Naive thymus-derived CD4-positive, alpha-beta T cell (primary cell): ENCODE measurements at regions of chr6 and their contacts with region 1.

Region 1: GRCh38 chr6:24689964-24690363 is 23.1 kb downstream of the ACOT13 start:
- DNase-seq: no peak
- ATAC-seq: no peak
- H3K4me3 ChIP-seq: no peak overlapping the region
- H3K4me3 Mint-ChIP-seq: no peak overlapping the region
- H3K27ac ChIP-seq: no peak overlapping the region
- H3K27ac Mint-ChIP-seq: peak overlapping the region in 1 of 9 donors; percentile 18
- H3K4me1 ChIP-seq: peaks cover 0 to 6% of the 10 kb centered on the region in 2 donors
- H3K4me1 Mint-ChIP-seq: peaks cover 7 to 24% (median 11%) of the 10 kb centered on the region in 7 donors
- H3K27me3 ChIP-seq: no peaks in the 10 kb centered on the region
- H3K27me3 Mint-ChIP-seq: no peaks in the 10 kb centered on the region

Region 2: DNA sequence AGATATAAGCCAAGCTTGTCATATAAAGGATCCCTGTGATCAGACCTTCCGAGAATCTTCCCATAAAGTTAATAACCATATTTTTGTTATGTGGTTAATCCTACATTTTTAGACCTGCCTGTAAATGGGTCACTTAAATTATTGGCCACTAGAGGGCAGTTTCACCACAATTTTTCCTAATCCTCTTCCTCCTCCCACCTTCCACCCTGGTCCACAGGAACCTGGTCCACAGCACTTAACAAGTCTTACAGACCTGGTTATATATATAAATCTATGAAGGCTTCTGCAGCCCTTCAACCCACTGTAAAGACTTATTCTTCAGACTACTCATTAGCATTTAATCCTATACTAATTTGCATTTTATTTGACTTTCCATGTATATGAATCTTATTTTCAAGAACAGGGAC is 258.9 kb before region 1 on chr6:
- CTCF ChIA-PET with region 1: no interaction called
- POLR2A ChIA-PET with region 1: no interaction called
- intact Hi-C with region 1: loop called (anchors 1 to 2 kb)
- DNase-seq: peak in 7 of 9 donors; percentile 4 to 41 (median 28)
- ATAC-seq: peak; percentile 46
- H3K4me3 ChIP-seq: no peak overlapping the region
- H3K4me3 Mint-ChIP-seq: no peak overlapping the region
- H3K27ac ChIP-seq: no peak overlapping the region
- H3K27ac Mint-ChIP-seq: no peak overlapping the region
- H3K4me1 ChIP-seq: no peaks in the 10 kb centered on the region
- H3K4me1 Mint-ChIP-seq: no peaks in the 10 kb centered on the region
- H3K27me3 ChIP-seq: no peaks in the 10 kb centered on the region
- H3K27me3 Mint-ChIP-seq: no peaks in the 10 kb centered on the region

Region 3: DNA sequence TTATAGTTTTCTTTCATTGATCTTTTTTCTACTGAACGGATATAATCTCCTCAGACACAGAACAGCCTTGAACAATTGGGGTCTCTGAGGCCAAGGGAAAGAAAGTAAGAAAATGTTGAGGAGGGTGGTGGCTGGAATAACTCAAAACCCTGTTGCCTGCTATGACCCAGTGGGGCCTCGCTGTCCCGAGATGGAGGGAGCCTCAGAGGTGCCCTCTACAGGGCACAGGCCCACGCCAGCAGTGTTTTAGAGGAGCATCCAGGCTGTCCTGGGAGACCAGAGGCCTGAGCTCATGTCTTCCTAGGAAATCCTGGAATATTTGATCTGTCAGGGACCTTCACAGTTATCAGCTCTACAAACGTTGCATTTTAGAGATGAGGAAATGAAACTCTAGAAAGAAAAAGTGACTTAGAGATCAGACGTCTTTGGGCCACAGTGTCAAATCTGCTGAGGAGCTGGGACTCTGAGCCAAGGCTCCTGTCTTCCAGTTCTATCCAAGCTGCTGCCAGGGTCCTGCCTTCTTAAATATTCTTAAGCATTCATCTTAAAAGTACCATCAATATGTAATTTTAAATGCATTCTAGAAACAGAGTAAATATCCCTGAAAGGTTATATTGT is 168.9 kb before region 1 on chr6:
- CTCF ChIA-PET with region 1: no interaction called
- POLR2A ChIA-PET with region 1: no interaction called
- intact Hi-C with region 1: loop called in 1 of 2 experiments (anchors 2 kb)
- DNase-seq: peak in 3 of 9 donors; percentile 10 to 26 (median 11)
- ATAC-seq: peak; percentile 75
- H3K4me3 ChIP-seq: no peak overlapping the region
- H3K4me3 Mint-ChIP-seq: no peak overlapping the region
- H3K27ac ChIP-seq: no peak overlapping the region
- H3K27ac Mint-ChIP-seq: peak overlapping the region in 1 of 9 donors; percentile 5
- H3K4me1 ChIP-seq: no peaks in the 10 kb centered on the region
- H3K4me1 Mint-ChIP-seq: peaks cover 0 to 20% (median 4%) of the 10 kb centered on the region in 7 donors
- H3K27me3 ChIP-seq: no peaks in the 10 kb centered on the region
- H3K27me3 Mint-ChIP-seq: no peaks in the 10 kb centered on the region

Region 4: DNA sequence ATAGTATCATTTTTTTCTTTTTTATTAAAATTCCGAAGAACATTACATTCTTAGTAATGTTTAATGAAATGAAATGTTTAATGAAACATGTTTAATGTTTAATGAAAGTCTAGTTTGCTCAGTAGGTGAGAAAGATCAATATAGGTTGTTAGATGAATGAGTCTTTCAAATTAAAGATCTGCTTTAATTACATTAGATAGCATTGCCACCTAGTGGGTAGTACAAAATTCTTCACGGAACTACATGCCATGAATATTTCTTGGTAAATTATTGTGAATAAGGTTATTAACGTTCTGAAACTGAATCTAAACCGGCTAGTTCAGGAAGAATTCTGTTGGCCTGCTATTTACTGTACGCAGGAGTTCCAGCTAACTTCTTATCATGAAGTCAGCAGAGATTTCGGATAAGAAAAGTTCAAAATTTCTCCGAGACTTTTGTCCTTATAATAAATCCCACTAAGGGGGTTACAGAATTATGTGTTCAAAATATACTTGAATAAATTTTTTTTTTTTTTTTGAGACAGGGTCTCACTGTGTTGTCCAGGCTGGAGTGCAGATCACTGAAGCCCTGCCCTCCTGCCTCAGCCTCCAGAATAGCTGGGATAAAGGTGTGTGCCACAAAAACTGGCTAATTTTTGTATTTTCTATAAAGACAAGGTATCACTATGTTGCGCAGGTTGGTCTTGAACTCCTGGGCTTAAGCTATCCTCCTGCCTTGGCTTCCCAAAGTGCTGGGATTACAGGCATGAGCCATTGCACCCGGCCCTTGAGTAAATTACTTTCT is 76.9 kb after region 1 on chr6:
- CTCF ChIA-PET with region 1: no interaction called
- POLR2A ChIA-PET with region 1: no interaction called
- intact Hi-C with region 1: loop called in 1 of 2 experiments (anchors 1 kb)
- DNase-seq: peak in 6 of 9 donors; percentile 9 to 48 (median 41)
- ATAC-seq: peak; percentile 74
- H3K4me3 ChIP-seq: no peak overlapping the region
- H3K4me3 Mint-ChIP-seq: no peak overlapping the region
- H3K27ac ChIP-seq: no peak overlapping the region
- H3K27ac Mint-ChIP-seq: no peak overlapping the region
- H3K4me1 ChIP-seq: no peaks in the 10 kb centered on the region
- H3K4me1 Mint-ChIP-seq: peaks cover 0 to 8% (median 3%) of the 10 kb centered on the region in 7 donors
- H3K27me3 ChIP-seq: no peaks in the 10 kb centered on the region
- H3K27me3 Mint-ChIP-seq: no peaks in the 10 kb centered on the region